Naive thymus-derived CD4-positive, alpha-beta T cell (primary cell): ENCODE measurements at regions of chr19 and their contacts with region 1.

Region 1: GRCh38 chr19:49301165-49301865 is 23.7 kb downstream of the SLC6A16 start:
- DNase-seq: peak; percentile 45 to 82 (median 66)
- ATAC-seq: peak; percentile 99
- H3K4me3 ChIP-seq: no peak overlapping the region
- H3K4me3 Mint-ChIP-seq: peak overlapping the region in 2 of 10 donors; percentile 15 to 25
- H3K27ac ChIP-seq: no peak overlapping the region
- H3K27ac Mint-ChIP-seq: peak overlapping the region in 1 of 9 donors; percentile 36
- H3K4me1 ChIP-seq: no peaks in the 10 kb centered on the region
- H3K4me1 Mint-ChIP-seq: peaks cover 0 to 8% (median 4%) of the 10 kb centered on the region in 7 donors
- H3K27me3 ChIP-seq: no peaks in the 10 kb centered on the region
- H3K27me3 Mint-ChIP-seq: peaks cover 0 to 17% (median 0%) of the 10 kb centered on the region in 5 donors

Region 2: DNA sequence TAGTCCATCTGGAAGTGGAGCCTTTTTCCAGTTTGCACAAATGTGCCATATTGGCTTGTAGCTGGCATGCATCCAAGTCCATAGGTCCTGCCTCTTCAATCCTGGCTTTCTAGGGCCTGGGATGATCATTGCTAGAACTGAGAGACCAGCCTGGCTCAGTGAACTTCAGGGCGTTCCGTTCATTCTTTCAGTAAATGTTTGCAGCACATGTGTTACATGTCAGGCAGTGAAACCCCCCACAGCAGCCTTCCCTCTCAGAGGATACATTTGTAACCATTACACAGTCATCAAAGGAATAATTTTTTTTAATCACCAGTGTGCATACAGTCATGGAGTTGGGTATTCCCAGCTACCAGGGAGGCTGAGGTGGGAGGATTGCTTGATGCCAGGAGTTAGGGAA is 595.9 kb before region 1 on chr19:
- CTCF ChIA-PET with region 1: no interaction called
- POLR2A ChIA-PET with region 1: no interaction called
- intact Hi-C with region 1: no loop called
- DNase-seq: no peak
- ATAC-seq: no peak
- H3K4me3 ChIP-seq: no peak overlapping the region
- H3K4me3 Mint-ChIP-seq: no peak overlapping the region
- H3K27ac ChIP-seq: no peak overlapping the region
- H3K27ac Mint-ChIP-seq: no peak overlapping the region
- H3K4me1 ChIP-seq: no peaks in the 10 kb centered on the region
- H3K4me1 Mint-ChIP-seq: peaks cover 0 to 5% (median 0%) of the 10 kb centered on the region in 7 donors
- H3K27me3 ChIP-seq: no peaks in the 10 kb centered on the region
- H3K27me3 Mint-ChIP-seq: no peaks in the 10 kb centered on the region

Region 3: GRCh38 chr19:49363268-49364082 is 62.2 kb after region 1 on chr19 and contains the start of gene DKKL1:
- CTCF ChIA-PET with region 1: interaction called, 3 read pairs
- POLR2A ChIA-PET with region 1: no interaction called
- intact Hi-C with region 1: loop called in 1 of 2 experiments (anchors 5 kb)
- DNase-seq: peak; percentile 33 to 84 (median 62)
- ATAC-seq: peak; percentile 93
- H3K4me3 ChIP-seq: peak within 1 kb of the TSS; percentile 47
- H3K4me3 Mint-ChIP-seq: peak within 1 kb of the TSS in 1 of 10 donors; percentile 45
- H3K27ac ChIP-seq: no peak within 1 kb of the TSS
- H3K27ac Mint-ChIP-seq: peak within 1 kb of the TSS in 1 of 9 donors; percentile 70
- H3K4me1 ChIP-seq: peaks cover 11 to 28% of the 10 kb centered on the region in 2 donors
- H3K4me1 Mint-ChIP-seq: peaks cover 5 to 21% (median 12%) of the 10 kb centered on the region in 7 donors
- H3K27me3 ChIP-seq: peaks cover 5 to 18% of the 10 kb centered on the region in 2 donors
- H3K27me3 Mint-ChIP-seq: peaks cover 0 to 36% (median 16%) of the 10 kb centered on the region in 5 donors
- total RNA-seq, gene DKKL1: not detected